ENCODE measurements at regions of chr1 and their contacts with region 1.

Region 1: DNA sequence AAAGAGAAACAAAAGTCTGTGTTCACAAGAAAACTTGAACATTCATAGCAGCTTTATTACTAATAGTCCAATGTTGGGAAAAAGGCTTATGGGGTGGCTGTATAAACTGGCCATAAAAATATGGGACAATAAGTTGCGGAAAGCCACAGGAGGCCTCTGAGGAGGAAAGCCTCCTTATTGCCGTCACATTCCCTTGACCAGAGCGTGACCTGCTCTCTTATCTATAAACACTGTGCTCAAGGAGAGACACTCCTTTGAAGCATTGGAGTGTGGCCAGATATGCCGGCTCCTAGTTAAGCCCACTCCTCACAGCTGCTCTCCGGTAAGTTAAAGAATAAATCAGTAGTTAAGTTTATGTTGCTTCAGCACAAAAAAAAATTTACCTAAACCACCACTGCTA is 19.7 kb downstream of the OR6Y1 start:
- DNase-seq: no peak
- ATAC-seq: no peak
- H3K4me3 ChIP-seq: no peak overlapping the region
- H3K27ac ChIP-seq: no peak overlapping the region
- H3K4me1 ChIP-seq: no peaks in the 10 kb centered on the region
- H3K27me3 ChIP-seq: no peaks in the 10 kb centered on the region
- CTCF ChIP-seq: no peak
- POLR2A ChIP-seq: no peak
- RAD21 ChIP-seq: no peak

Region 2: GRCh38 chr1:158290321-158290844 is 244.1 kb before region 1 on chr1:
- CTCF ChIA-PET with region 1: no interaction called
- POLR2A ChIA-PET with region 1: no interaction called
- dilution Hi-C with region 1: no loop called
- in situ Hi-C with region 1: no loop called
- intact Hi-C with region 1: loop called (anchors 10 kb)
- DNase-seq: no peak
- ATAC-seq: no peak
- H3K4me3 ChIP-seq: no peak overlapping the region
- H3K27ac ChIP-seq: no peak overlapping the region
- H3K4me1 ChIP-seq: no peaks in the 10 kb centered on the region
- H3K27me3 ChIP-seq: no peaks in the 10 kb centered on the region
- CTCF ChIP-seq: no peak
- POLR2A ChIP-seq: no peak
- RAD21 ChIP-seq: no peak

Region 3: GRCh38 chr1:158552296-158552695 is 17.8 kb after region 1 on chr1:
- CTCF ChIA-PET with region 1: no interaction called
- POLR2A ChIA-PET with region 1: no interaction called
- dilution Hi-C with region 1: no loop called
- in situ Hi-C with region 1: no loop called
- intact Hi-C with region 1: no loop called
- DNase-seq: no peak
- ATAC-seq: no peak
- H3K4me3 ChIP-seq: no peak overlapping the region
- H3K27ac ChIP-seq: no peak overlapping the region
- H3K4me1 ChIP-seq: no peaks in the 10 kb centered on the region
- H3K27me3 ChIP-seq: no peaks in the 10 kb centered on the region
- CTCF ChIP-seq: no peak
- POLR2A ChIP-seq: no peak
- RAD21 ChIP-seq: no peak

Region 4: DNA sequence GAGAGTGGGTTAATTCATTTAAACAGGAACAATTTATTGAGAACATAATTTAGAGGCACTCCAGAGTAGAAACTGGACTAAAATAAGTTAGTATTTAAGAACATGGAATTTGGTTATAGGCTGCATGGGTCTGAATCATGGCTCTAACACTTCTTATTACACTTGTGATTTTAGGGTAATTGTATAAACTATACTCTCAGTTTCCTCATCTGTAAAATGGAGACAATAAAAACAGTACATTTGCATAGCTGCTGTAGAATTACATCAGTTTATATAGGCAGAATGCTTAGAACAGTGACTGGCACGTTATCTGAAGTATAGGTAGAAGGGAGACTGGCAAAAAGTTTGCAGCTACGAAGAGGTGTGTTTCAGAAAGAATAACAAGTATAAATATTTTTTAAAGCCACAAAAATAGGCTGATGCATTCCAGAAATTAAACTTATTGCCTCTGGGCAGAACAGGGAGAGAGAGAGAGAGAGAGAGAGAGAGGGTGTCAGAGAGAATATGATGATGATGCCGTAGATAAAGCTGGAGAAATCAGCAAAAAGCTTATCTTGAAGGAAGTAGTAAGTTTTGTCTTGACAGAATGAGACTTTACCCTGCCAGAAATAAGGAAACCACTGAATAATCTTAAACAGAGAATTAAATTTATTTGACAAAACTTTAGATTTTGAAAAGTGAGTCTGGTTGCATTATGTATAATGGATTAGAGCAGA is 194.2 kb after region 1 on chr1:
- CTCF ChIA-PET with region 1: no interaction called
- POLR2A ChIA-PET with region 1: no interaction called
- dilution Hi-C with region 1: no loop called
- in situ Hi-C with region 1: no loop called
- intact Hi-C with region 1: no loop called
- DNase-seq: no peak
- ATAC-seq: no peak
- H3K4me3 ChIP-seq: no peak overlapping the region
- H3K27ac ChIP-seq: no peak overlapping the region
- H3K4me1 ChIP-seq: no peaks in the 10 kb centered on the region
- H3K27me3 ChIP-seq: no peaks in the 10 kb centered on the region
- CTCF ChIP-seq: no peak
- POLR2A ChIP-seq: no peak
- RAD21 ChIP-seq: no peak

Measured in IMR-90 (cell line).